HEK293 (cell line): ENCODE measurements at regions of chr6 and their contacts with region 1.

Region 1: DNA sequence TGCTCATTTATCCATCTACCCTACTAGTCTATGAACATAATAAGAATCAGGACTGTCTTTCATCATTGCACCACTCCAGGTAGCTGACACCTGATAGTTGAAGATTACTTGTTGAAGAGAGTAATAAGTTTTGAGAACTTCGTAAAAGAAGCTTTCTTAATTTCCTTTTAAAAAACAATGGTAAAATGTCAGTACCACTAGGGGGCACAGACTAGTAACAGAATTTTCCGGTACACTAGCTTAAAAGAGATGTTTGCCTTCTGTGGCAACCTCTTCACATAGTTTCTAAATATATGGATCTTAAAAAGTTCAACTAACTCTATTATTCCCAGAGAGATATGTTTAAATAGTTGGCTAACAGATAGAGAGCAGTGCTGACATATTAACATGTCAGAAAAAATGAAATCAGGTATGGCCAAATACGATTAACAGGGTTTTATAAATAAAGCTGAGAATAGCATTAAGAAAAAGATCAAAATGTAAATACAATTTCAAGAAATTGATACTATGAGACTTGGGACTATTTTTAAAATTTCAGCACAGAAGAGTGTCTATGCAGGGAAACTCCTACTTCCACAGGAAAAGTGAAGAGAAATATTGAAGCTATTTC is 5.4 kb upstream of the KCNQ5 start:
- H3K4me3 ChIP-seq: no peak overlapping the region
- H3K27ac ChIP-seq: no peak overlapping the region
- H3K4me1 ChIP-seq: no peaks in the 10 kb centered on the region
- CTCF ChIP-seq: no peak

Region 2: DNA sequence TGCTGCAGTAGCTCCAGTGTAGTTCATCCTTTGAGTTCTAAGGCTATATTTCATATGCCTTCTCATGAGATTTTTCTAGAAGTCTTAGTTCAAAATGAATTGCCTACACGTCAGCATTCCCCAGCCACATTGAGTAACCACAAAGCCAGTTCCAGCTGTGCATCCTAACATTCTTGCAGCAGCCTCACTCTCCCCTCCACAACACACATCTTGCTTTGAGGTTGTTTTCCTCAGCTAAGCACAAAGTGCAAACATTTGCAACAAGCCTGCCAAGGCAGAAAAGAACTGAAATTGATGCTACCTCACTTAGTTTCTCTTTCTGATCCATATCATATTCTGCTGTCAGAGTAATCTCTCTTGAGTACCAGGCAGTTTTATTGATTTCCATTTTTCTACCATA is 155.4 kb before region 1 on chr6:
- CTCF ChIA-PET with region 1: no interaction called
- POLR2A ChIA-PET with region 1: no interaction called
- H3K4me3 ChIP-seq: no peak overlapping the region
- H3K27ac ChIP-seq: no peak overlapping the region
- H3K4me1 ChIP-seq: no peaks in the 10 kb centered on the region
- CTCF ChIP-seq: no peak

Region 3: GRCh38 chr6:72553531-72554511 is 62.7 kb before region 1 on chr6:
- CTCF ChIA-PET with region 1: no interaction called
- POLR2A ChIA-PET with region 1: no interaction called
- H3K4me3 ChIP-seq: no peak overlapping the region
- H3K27ac ChIP-seq: no peak overlapping the region
- H3K4me1 ChIP-seq: no peaks in the 10 kb centered on the region
- CTCF ChIP-seq: no peak

Region 4: DNA sequence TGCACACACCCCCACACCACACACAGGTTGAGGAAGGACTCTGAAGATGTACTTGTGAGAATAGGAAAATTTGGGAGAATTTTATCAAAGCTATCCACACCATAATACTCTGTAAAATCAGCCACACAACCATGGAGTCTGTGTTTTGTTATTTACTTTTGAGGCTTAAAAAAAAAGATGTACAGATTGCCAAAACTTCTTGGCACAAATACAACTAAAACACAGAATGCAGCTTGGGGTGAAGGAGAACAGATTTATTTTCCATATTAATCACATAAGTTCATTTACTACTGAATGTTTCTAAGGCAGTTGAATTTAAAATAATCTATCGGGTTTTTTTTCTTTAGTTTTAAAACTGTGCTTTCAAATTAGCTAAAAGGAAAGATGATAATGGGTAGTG is 27.4 kb before region 1 on chr6:
- CTCF ChIA-PET with region 1: interaction called, 10 read pairs
- POLR2A ChIA-PET with region 1: no interaction called
- H3K4me3 ChIP-seq: no peak overlapping the region
- H3K27ac ChIP-seq: no peak overlapping the region
- H3K4me1 ChIP-seq: no peaks in the 10 kb centered on the region
- CTCF ChIP-seq: no peak

Region 5: DNA sequence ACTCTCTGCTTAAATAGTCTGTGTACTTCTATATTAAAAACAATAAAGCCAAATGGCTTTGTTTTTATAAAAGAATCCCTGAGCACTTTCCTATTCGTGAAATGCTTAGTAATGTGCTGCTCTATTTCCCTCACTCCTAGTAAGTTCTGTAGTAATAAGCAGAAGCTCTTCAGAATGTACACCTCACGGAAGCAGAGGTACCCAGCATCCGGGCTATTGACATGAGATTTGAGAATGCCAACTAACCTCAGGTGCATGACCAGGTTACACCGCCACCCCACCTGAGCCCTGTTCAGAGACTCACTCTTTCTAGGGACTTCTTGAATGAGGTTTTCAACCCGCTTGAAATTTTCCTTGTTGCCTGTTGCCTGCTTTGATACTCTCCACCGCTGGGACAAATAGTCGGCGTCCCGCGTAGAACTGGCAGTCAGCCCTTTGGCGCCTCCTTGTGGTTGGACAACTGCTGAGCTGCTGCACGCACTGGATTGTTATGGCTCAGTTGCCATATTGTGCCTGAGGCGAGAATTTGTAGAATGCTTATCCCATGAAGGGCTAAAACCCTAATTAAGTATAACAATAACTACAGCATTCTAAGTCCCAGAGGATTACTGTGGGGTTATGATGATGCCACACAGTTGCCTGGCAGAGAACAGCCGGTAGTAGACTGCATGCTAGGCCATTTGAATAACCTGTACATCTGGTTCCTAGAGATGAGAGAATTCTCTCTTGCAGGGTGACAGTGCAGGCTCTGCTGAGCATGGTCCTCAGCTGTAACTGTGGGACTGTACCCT is 513.3 kb after region 1 on chr6:
- CTCF ChIA-PET with region 1: interaction called, 160 read pairs
- POLR2A ChIA-PET with region 1: interaction called, 3 read pairs
- H3K4me3 ChIP-seq: no peak overlapping the region
- H3K27ac ChIP-seq: no peak overlapping the region
- H3K4me1 ChIP-seq: no peaks in the 10 kb centered on the region
- CTCF ChIP-seq: peak; percentile 91

Region 6: GRCh38 chr6:73180763-73181619 is 564.5 kb after region 1 on chr6:
- CTCF ChIA-PET with region 1: interaction called, 11 read pairs
- POLR2A ChIA-PET with region 1: no interaction called
- H3K4me3 ChIP-seq: no peak overlapping the region
- H3K27ac ChIP-seq: no peak overlapping the region
- H3K4me1 ChIP-seq: peaks cover 3% of the 10 kb centered on the region; the same call in 1 of the 2 replicates
- CTCF ChIP-seq: peak; percentile 57

Region 7: GRCh38 chr6:73329201-73329600 is 712.7 kb after region 1 on chr6:
- CTCF ChIA-PET with region 1: interaction called, 20 read pairs
- POLR2A ChIA-PET with region 1: no interaction called
- H3K4me3 ChIP-seq: no peak overlapping the region
- H3K27ac ChIP-seq: no peak overlapping the region
- H3K4me1 ChIP-seq: no peaks in the 10 kb centered on the region
- CTCF ChIP-seq: no peak